Lower lobe of right lung (tissue), 2 donors: ENCODE measurements at regions of chr22 and their contacts with region 1.

Region 1: DNA sequence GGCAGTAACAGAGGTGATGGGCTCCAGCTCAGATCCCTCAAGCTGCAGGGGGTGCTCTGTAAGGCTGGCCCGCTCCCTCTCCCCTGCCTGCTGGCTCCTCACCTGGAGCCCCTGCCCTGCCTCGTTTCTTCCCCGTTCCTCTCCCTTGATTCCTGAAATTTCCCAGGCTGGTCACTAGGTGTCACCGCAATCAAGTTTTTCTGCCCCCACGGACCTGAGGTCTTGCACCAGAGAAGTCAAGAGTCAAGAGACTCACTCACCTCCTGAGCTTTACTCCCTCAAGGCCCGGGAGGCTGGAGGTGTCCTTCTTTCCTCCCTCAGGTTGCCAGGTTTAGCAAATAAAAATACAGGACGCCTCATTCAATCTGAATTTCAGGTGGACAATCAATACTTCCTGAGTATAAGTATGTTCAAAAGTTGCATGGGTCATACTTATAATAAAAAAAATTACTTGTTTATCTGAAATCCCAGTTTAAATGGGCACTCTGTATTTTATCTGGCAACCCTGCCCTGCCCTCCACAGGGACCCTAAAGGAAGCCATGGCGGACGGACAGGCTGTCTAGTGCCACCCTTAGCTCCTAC is 69.2 kb downstream of the SCUBE1 start:
- DNase-seq: no peak
- ATAC-seq: peak; percentile 65 to 74
- H3K4me3 ChIP-seq: no peak overlapping the region
- H3K27ac ChIP-seq: no peak overlapping the region
- H3K4me1 ChIP-seq: peaks cover 6% of the 10 kb centered on the region
- H3K27me3 ChIP-seq: no peaks in the 10 kb centered on the region
- CTCF ChIP-seq: peak; percentile 79

Region 2: DNA sequence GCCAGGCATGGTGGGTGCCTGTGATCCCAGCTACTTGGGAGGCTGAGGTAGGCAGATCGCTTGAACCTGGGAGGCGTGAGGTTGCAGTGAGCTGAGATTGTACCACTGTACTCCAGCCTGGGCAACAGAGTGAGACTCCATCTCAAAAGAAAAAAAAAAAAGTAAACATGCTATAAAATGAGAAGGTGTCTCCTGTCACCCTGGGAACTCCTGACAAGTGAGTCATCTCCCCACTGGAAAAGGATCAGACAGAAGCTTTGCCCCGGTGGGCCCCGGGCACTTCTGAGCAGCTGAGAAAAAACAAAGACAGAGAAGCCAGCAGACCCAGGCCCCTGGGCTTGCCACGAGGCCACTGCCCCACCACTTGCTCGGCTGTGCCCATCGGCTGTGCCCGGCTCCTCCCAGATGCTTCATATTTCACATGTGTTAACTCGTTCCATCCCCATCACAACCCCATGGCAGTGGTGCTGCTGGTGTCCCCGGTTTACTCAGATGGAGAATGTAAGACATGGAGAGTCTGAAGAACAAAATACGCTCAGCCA is 207.1 kb before region 1 on chr22:
- intact Hi-C with region 1: no loop called
- DNase-seq: no peak
- ATAC-seq: no peak
- H3K4me3 ChIP-seq: no peak overlapping the region
- H3K27ac ChIP-seq: no peak overlapping the region
- H3K4me1 ChIP-seq: no peaks in the 10 kb centered on the region
- H3K27me3 ChIP-seq: no peaks in the 10 kb centered on the region
- CTCF ChIP-seq: no peak

Region 3: DNA sequence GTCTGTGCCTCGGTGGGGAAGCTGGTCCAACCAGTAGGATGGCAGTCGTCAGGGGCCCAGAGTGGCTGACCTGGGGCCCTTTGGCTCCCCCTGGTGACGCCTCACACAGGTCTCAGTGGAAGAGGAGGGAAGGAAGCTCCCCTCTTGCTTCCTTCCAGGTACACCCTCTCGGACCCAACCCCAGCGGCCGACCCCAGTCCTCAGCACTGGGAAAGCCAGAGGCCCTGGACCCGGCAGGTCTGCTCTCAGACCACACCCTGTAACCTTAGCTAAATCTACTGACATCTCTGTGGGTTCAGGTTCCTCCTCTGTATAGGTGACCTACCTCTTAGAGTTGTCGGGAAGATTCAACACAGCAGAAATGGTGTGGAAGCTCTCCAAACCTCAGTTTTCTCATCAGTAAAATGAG is 72.5 kb after region 1 on chr22:
- intact Hi-C with region 1: loop called (anchors 10 kb)
- DNase-seq: peak; percentile 75
- ATAC-seq: peak; percentile 65 to 70
- H3K4me3 ChIP-seq: no peak overlapping the region
- H3K27ac ChIP-seq: no peak overlapping the region
- H3K4me1 ChIP-seq: peaks cover 17% of the 10 kb centered on the region
- H3K27me3 ChIP-seq: peaks cover 30% of the 10 kb centered on the region
- CTCF ChIP-seq: peak; percentile 80

Region 4: GRCh38 chr22:43385770-43386641 is 112.0 kb after region 1 on chr22:
- intact Hi-C with region 1: loop called (anchors 10 kb)
- DNase-seq: peak; percentile 84
- ATAC-seq: peak; percentile 92
- H3K4me3 ChIP-seq: no peak overlapping the region
- H3K27ac ChIP-seq: no peak overlapping the region
- H3K4me1 ChIP-seq: peaks cover 7% of the 10 kb centered on the region
- H3K27me3 ChIP-seq: peaks cover 16% of the 10 kb centered on the region
- CTCF ChIP-seq: peak; percentile 90